Lower leg skin (tissue), 4 donors: ENCODE measurements at regions of chr12 and their contacts with region 1.

Region 1: DNA sequence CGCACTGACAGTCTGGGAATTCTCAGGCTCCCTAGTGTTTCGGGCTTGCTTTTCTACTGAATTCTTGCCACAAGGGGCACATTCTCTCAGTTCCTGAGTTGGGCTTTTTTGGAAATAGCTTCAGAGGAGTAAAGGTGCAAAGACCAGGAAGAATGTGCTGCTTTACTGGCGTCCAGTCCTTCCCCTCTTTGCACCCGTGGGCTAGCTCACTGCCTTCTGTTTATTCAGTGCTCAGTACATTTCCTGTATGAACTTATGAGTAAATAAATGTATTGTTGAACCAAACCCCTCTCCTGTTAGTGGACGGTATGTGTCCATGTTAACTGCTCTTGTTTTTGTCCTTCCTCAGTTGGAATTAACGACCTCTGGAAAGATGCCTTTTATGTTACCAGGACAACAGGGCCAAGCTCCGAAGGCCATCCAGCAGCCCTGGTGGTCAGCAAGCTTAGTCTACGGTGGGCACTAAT is 24.0 kb downstream of the GSG1 start:
- DNase-seq: no peak
- H3K4me3 ChIP-seq: no peak overlapping the region
- CTCF ChIP-seq: no peak
- POLR2A ChIP-seq: no peak

Region 2: DNA sequence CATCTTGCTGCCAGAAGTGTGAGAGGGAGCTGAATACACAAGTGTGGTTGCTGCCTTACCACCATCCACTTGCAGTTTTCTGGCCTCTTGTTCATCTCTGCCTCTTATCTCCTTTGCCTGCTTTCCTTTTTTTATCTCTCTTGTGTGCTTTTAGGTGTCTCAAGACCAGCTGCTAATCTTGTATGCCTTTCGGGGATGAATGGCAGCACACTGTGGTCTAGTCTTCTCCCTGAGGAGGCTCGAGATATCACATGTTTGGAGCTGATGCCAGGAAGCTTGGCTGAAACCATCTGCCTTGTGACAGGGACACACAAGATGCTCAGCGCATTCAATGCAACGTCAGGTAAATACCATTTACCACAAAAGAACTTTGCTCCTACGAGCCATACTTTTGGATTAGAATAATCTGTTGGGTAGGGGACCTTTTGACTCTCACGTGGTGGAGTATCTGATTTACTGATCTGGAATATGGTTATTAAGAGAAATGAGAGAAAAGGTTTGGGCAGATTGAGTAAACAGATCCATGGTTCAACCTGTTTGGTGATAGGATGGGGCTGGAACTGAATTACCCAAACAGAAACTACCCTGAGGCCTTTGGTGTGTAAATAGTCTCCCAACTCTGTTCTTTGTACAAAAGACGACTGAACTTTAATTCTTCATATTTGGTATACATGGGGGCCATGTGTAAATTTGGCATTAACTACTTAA is 17.9 kb before region 1 on chr12:
- intact Hi-C with region 1: loop called (anchors 1 kb)
- DNase-seq: no peak
- H3K4me3 ChIP-seq: no peak overlapping the region
- CTCF ChIP-seq: no peak
- POLR2A ChIP-seq: no peak

Region 3: DNA sequence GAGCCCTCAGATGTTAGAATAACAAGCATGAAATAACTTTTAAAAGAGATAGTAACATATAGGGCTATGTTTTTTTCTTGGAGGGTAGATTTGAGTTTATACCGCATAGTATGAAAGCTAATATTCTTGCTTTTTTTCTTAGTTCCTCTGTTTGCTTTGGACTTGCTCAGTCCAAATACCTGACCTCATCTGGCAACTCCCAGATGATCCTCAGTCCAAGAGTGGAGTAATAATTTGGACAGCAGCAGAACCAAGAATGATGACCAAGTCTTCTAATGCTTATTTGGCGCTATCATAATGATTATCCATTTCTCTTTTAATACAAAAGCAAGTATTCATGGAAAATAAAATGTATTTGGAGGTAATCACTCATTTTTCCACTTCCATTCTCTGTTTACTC is 1571.3 kb after region 1 on chr12:
- intact Hi-C with region 1: loop called (anchors 5 kb)
- DNase-seq: no peak
- H3K4me3 ChIP-seq: no peak overlapping the region
- CTCF ChIP-seq: no peak
- POLR2A ChIP-seq: no peak